PC-3 (cell line): ENCODE measurements at regions of chr5 and their contacts with region 1.

Region 1: DNA sequence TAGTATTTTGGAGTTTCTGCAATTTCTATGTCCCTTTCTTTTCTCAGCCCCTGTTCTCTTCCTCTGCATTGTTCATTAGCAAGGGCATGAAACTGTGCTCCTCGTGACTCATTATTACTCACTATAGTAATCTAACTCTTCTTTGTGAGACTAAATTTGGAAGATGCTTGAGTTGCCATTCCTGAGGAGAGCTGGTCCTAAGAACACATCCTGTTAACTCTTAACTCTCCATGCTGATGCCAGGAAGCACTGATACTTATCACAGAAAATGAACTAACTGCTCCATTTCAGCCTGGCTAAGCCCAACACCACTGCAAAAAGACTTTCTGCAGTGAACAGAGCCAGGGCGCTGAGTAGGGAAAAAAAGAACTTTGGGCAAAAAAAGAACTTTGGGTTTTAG is 10.6 kb upstream of the CSNK1A1 start:
- DNase-seq: peak; percentile 99
- ATAC-seq: peak; percentile 90
- H3K4me3 ChIP-seq: peak overlapping the region; percentile 61
- H3K27ac ChIP-seq: peak overlapping the region; percentile 92
- H3K4me1 ChIP-seq: peaks cover 41% of the 10 kb centered on the region
- H3K27me3 ChIP-seq: no peaks in the 10 kb centered on the region
- CTCF ChIP-seq: no peak

Region 2: DNA sequence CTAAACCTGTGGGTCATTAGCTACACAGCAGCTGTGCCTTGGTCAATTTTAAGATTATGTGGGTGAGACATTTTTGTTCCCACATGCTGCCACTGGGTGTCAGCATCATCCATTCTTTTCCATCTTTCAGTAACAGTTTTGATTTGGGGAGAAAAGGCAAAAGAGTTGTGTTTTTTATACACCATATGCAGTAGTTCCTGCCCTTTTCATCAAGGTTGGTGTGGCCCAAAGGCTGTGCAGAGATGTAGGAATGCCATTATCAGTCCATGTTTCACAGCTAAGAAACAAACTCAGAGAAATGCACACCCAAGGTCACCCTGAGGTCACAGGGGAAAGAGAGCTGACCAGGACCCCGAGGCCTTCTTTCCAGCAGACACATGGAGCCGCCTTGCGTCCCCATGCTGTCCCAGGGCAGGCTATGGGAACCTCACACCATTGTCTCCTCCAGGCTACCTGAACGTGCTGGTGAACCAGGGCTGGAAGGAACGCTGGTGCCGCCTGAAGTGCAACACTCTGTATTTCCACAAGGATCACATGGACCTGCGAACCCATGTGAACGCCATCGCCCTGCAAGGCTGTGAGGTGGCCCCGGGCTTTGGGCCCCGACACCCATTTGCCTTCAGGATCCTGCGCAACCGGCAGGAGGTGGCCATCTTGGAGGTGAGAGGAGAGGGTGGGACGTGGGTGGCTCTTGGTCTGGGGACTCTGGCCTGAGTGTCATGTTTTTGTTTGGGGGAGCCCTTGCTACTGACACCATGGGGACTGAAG is 244.4 kb before region 1 on chr5:
- CTCF ChIA-PET with region 1: no interaction called
- POLR2A ChIA-PET with region 1: no interaction called
- intact Hi-C with region 1: loop called (anchors 1 kb)
- DNase-seq: peak; percentile 86
- ATAC-seq: peak; percentile 72
- H3K4me3 ChIP-seq: no peak overlapping the region
- H3K27ac ChIP-seq: no peak overlapping the region
- H3K4me1 ChIP-seq: peaks cover 10% of the 10 kb centered on the region
- H3K27me3 ChIP-seq: no peaks in the 10 kb centered on the region
- CTCF ChIP-seq: peak; percentile 98

Region 3: GRCh38 chr5:149434162-149435014 is 127.5 kb before region 1 on chr5:
- CTCF ChIA-PET with region 1: interaction called, 8 read pairs
- POLR2A ChIA-PET with region 1: no interaction called
- intact Hi-C with region 1: loop called (anchors 1 kb)
- DNase-seq: peak; percentile 84
- ATAC-seq: peak; percentile 14; the same call in 1 of the 2 replicates
- H3K4me3 ChIP-seq: no peak overlapping the region
- H3K27ac ChIP-seq: no peak overlapping the region
- H3K4me1 ChIP-seq: peaks cover 24% of the 10 kb centered on the region
- H3K27me3 ChIP-seq: no peaks in the 10 kb centered on the region
- CTCF ChIP-seq: peak; percentile 98

Region 4: DNA sequence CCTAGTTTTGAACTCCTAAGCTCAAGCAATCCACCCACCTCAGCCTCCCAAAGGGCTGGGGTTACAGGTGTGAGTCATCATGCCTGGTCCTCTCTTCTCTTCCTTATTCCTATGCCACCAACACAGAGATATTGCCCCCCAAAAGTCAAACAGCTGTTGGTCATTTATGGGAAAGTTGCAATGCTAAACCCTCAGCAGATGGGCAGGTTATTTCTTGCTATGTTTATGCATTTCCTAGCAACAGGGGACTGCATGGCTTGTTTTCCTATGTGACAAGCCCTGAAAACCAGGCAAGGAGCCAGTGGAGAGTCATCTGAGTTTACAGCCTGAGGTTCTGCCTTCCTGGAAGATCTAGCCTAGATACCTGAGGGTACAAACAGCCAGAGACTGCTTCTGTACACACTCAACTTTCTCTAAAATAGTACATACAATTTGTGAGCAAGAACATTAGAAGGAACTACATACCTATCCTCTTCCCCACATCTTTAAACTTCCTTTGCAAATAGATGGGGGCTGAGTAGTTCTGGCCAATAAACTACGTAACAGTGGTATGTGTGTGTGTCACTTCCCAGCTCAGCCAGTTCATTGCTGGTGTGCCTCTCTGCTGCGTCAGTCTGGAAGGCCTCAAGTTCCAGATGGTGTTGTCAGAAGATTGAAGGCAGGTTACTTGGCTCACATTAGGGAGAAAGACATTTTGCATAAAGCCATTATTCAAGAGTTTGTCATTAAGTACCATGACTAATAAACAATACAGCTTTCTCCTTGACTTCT is 76.0 kb before region 1 on chr5:
- CTCF ChIA-PET with region 1: no interaction called
- POLR2A ChIA-PET with region 1: interaction called, 6 read pairs
- intact Hi-C with region 1: loop called (anchors 1 kb)
- DNase-seq: peak; percentile 100
- ATAC-seq: peak; percentile 75
- H3K4me3 ChIP-seq: peak overlapping the region; percentile 9; the same call in 1 of the 2 replicates
- H3K27ac ChIP-seq: peak overlapping the region; percentile 94
- H3K4me1 ChIP-seq: peaks cover 87% of the 10 kb centered on the region
- H3K27me3 ChIP-seq: no peaks in the 10 kb centered on the region
- CTCF ChIP-seq: no peak

Region 5: GRCh38 chr5:149618581-149619251 is 56.9 kb after region 1 on chr5:
- CTCF ChIA-PET with region 1: interaction called, 17 read pairs
- POLR2A ChIA-PET with region 1: interaction called, 5 read pairs
- intact Hi-C with region 1: loop called (anchors 1 kb)
- DNase-seq: peak; percentile 91
- ATAC-seq: peak; percentile 88
- H3K4me3 ChIP-seq: no peak overlapping the region
- H3K27ac ChIP-seq: peak overlapping the region; percentile 57
- H3K4me1 ChIP-seq: peaks cover 30% of the 10 kb centered on the region
- H3K27me3 ChIP-seq: no peaks in the 10 kb centered on the region
- CTCF ChIP-seq: peak; percentile 99

Region 6: GRCh38 chr5:149711338-149711737 is 149.5 kb after region 1 on chr5:
- CTCF ChIA-PET with region 1: no interaction called
- POLR2A ChIA-PET with region 1: no interaction called
- intact Hi-C with region 1: no loop called
- DNase-seq: no peak
- ATAC-seq: no peak
- H3K4me3 ChIP-seq: no peak overlapping the region
- H3K27ac ChIP-seq: no peak overlapping the region
- H3K4me1 ChIP-seq: no peaks in the 10 kb centered on the region
- H3K27me3 ChIP-seq: peaks cover 10% of the 10 kb centered on the region; the same call in 1 of the 2 replicates
- CTCF ChIP-seq: no peak